ENCODE measurements at regions of chr2 and their contacts with region 1.

Region 1: GRCh38 chr2:232126301-232127099 is 165.0 kb downstream of the DIS3L2 start:
- DNase-seq: no peak
- H3K4me3 ChIP-seq: no peak overlapping the region
- H3K27ac ChIP-seq: no peak overlapping the region
- H3K4me1 ChIP-seq: peaks cover 0 to 3% (median 0%) of the 10 kb centered on the region in 4 experiments; a peak in 2 of 7 replicates
- H3K27me3 ChIP-seq: no peaks in the 10 kb centered on the region
- CTCF ChIP-seq: no peak
- EP300 ChIP-seq: no peak
- POLR2A ChIP-seq: no peak
- RAD21 ChIP-seq: no peak

Region 2: DNA sequence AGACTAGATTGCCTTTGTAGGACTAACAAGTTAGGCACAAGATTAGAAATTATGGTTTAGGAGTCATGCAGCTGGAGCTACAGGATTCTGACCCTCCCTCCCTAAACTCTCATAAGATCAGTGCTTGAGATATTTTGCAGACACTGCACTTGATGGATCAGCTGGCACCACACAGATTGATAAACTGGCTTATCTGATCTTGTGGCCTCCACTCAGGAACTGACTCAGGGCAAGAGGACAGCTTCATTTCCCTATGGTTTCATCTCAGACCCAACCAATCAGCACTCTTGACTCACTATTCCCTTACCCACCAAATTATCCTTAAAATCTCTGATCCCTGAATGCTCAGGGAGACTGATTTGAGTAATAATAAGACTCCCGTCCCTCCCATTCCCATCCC is 12.7 kb before region 1 on chr2:
- CTCF ChIA-PET with region 1: interaction called, 20 read pairs
- POLR2A ChIA-PET with region 1: no interaction called
- DNase-seq: no peak
- H3K4me3 ChIP-seq: no peak overlapping the region
- H3K27ac ChIP-seq: no peak overlapping the region
- H3K4me1 ChIP-seq: peaks cover 0 to 2% (median 0%) of the 10 kb centered on the region in 4 experiments; a peak in 3 of 7 replicates
- H3K27me3 ChIP-seq: no peaks in the 10 kb centered on the region
- CTCF ChIP-seq: no peak
- EP300 ChIP-seq: no peak
- POLR2A ChIP-seq: no peak
- RAD21 ChIP-seq: no peak

Region 3: DNA sequence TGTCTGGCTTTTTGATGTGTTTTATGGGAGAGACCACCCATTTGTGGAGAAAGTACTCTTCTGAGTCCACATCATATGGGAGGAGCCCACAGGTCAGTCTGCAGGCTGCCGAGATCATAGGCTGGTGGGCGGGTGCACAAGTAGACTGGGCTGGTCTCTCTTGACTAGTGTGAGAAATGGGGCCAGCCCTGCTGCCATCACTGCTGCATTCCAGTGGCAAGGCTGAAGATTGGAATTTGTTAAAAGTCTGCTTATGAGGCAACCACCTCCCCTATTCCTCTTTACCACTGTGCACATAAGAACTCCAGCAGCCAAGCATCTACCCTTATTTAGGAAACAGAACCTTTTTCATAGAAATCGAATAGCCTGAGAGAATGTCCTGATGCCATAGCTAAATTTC is 35.7 kb after region 1 on chr2:
- CTCF ChIA-PET with region 1: no interaction called
- POLR2A ChIA-PET with region 1: no interaction called
- DNase-seq: no peak
- H3K4me3 ChIP-seq: no peak overlapping the region
- H3K27ac ChIP-seq: no peak overlapping the region
- H3K4me1 ChIP-seq: no peaks in the 10 kb centered on the region
- H3K27me3 ChIP-seq: no peaks in the 10 kb centered on the region
- CTCF ChIP-seq: no peak
- EP300 ChIP-seq: no peak
- POLR2A ChIP-seq: no peak
- RAD21 ChIP-seq: no peak